Heart right ventricle (tissue), 16 donors: ENCODE measurements at regions of chr11 and their contacts with region 1.

Region 1: DNA sequence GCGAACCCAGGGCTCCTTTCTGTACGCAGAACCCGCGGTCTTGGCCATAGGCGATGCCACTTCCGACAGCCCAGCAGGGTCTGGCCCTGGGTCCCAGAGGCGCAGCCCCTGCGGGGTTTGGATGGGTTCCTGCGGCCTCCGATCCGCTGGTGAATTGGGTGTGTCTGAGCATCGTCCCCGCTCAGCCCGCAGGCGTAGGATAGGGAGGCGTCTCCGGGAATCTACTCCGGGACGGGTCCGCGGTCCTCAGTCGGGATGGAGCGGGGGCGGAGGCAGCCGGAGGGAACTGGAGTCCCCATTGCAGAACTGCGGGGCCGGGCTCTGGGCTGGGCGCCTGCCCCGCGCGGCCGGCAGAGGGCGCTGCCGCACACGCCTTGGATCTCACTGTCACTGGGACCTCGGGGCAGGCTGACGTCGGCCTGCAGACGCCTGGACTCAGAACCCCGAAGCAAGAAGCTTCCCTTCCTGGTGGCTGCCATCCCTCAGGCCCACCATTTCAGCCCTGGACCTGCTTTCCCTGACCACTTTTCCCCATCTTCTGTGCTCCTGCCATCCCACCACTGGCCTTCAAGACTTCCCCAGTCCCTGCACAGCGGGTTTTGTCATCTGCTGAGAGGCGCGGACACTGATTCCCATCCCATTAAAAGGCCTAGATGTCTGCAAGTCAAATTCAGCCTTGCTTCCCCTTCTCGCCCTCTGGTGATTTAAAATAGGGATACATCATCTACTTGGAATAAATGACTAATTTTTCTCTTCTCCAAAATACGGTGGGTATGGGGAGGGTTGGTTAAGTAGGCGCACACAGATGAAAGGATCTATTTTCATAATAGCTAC is 38.3 kb upstream of the CREB3L1 start:
- DNase-seq: peak; percentile 85 to 91
- ATAC-seq: peak; percentile 78 to 92 (median 90)
- H3K4me3 ChIP-seq: peak overlapping the region; percentile 39 to 69 (median 54)
- H3K27ac ChIP-seq: peak overlapping the region; percentile 82 to 99 (median 93)
- H3K4me1 ChIP-seq: peaks cover 10 to 53% (median 32%) of the 10 kb centered on the region in 9 donors
- H3K27me3 ChIP-seq: peaks cover 0 to 8% (median 0%) of the 10 kb centered on the region in 7 donors
- CTCF ChIP-seq: peak; percentile 99 to 100 (median 99)

Region 2: DNA sequence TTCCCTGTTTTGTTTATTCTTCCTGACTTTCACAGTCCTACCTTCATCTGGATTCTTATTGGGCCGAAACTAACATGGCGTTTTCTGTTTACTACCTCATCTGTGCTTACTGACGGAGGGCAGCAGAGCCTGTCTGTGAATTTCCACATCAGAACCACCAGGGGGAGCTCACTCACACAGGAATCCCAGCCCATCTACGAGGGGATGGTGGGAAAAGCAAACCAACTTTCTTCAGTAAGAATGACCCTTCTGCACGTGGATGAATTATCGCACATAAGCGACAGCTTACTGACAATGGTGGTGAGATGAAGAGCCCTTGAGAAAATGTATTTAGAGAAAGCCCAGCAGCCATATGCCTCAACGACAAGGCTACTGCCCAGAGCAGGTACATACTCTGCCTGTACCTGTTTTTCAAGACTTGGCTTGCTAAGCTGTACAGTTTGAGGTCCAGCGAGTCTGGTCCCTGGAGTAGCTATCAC is 274.2 kb before region 1 on chr11:
- intact Hi-C with region 1: loop called in 2 of 10 experiments (anchors 10 kb)
- DNase-seq: peak; percentile 17 to 67
- ATAC-seq: peak; percentile 63 to 91 (median 85)
- H3K4me3 ChIP-seq: no peak overlapping the region
- H3K27ac ChIP-seq: peak overlapping the region in 2 of 10 donors; percentile 18 to 19
- H3K4me1 ChIP-seq: peaks cover 0 to 26% (median 8%) of the 10 kb centered on the region in 9 donors
- H3K27me3 ChIP-seq: no peaks in the 10 kb centered on the region
- CTCF ChIP-seq: peak; percentile 78 to 96 (median 89)

Region 3: GRCh38 chr11:46272816-46273427 is 33.7 kb after region 1 on chr11:
- intact Hi-C with region 1: loop called in 4 of 10 experiments (anchors 2 to 5 kb)
- DNase-seq: peak; percentile 73 to 81
- ATAC-seq: peak; percentile 62 to 82 (median 70)
- H3K4me3 ChIP-seq: no peak overlapping the region
- H3K27ac ChIP-seq: peak overlapping the region; percentile 67 to 88 (median 82)
- H3K4me1 ChIP-seq: peaks cover 31 to 84% (median 61%) of the 10 kb centered on the region in 9 donors
- H3K27me3 ChIP-seq: peaks cover 0 to 17% (median 0%) of the 10 kb centered on the region in 7 donors
- CTCF ChIP-seq: no peak

Region 4: GRCh38 chr11:46295312-46296058 is 56.3 kb after region 1 on chr11:
- intact Hi-C with region 1: loop called in 1 of 10 experiments (anchors 5 kb)
- DNase-seq: peak; percentile 78 to 83
- ATAC-seq: peak; percentile 90 to 93 (median 92)
- H3K4me3 ChIP-seq: peak overlapping the region; percentile 35 to 75 (median 56)
- H3K27ac ChIP-seq: peak overlapping the region in 9 of 10 donors; percentile 31 to 76 (median 50)
- H3K4me1 ChIP-seq: peaks cover 13 to 59% (median 44%) of the 10 kb centered on the region in 9 donors
- H3K27me3 ChIP-seq: peaks cover 0 to 30% (median 0%) of the 10 kb centered on the region in 7 donors
- CTCF ChIP-seq: no peak

Region 5: DNA sequence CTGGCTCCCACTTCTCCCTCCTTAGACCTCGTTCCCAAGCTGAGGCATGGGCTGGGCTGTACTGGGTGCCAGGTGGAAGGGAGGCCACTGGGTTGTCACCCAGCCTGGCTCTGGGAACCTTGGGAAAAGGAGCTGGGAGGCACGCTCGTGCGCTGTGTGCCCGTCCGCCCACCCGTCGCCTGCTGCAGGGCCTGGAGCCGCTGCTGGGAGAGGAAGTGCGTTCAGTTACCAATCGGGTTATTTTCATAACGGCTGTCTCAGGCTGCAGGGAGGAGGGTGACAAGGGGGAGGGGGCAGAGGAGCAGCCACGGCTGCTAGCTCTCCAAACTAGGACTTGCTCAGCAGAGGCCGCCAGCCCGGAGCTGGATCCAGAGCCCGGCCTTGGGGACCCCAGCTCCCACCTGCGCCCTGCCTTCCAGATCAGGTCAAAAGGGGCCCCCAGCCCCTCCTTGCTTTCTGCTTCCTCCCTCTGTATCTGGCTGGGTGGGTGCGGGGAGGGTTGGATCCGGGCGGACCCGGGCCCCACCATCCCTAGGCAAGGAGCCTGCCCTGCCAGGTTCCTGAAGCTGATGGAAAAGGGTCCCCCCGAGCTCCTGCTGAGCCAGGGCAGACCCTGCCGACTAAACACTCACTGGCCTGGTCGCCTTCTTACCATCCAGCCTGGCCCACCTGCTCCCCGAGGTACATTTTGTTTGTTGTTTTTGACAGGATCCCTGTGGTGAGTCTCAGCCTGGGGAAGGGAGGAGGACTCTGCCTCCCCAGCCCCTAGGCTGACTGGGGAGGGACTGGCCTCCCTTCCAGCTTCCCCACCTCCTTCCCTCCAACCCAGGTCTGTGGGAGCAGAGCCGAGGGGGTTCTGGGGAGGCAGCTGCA is 122.3 kb after region 1 on chr11:
- intact Hi-C with region 1: loop called in 1 of 10 experiments (anchors 5 kb)
- DNase-seq: peak; percentile 74 to 87
- ATAC-seq: peak; percentile 72 to 87 (median 82)
- H3K4me3 ChIP-seq: peak overlapping the region in 9 of 10 donors; percentile 31 to 60 (median 57)
- H3K27ac ChIP-seq: peak overlapping the region; percentile 68 to 97 (median 93)
- H3K4me1 ChIP-seq: peaks cover 25 to 79% (median 54%) of the 10 kb centered on the region in 9 donors
- H3K27me3 ChIP-seq: no peaks in the 10 kb centered on the region
- CTCF ChIP-seq: no peak